Dendritic cell treated with granulocyte-macrophage colony-stimulating factor and Interleukin-4, amounts not matched to agents 40 ng/mL and 50 ng/mL, for 4 days (primary cell): ENCODE measurements at regions of chr18 and their contacts with region 1.

Region 1: GRCh38 chr18:22800551-22800951 is 132.6 kb upstream of the RBBP8 start:
- H3K4me3 Mint-ChIP-seq: no peak overlapping the region
- H3K27ac Mint-ChIP-seq: no peak overlapping the region
- H3K4me1 Mint-ChIP-seq: no peaks in the 10 kb centered on the region
- H3K27me3 Mint-ChIP-seq: peaks cover 2% of the 10 kb centered on the region

Region 2: GRCh38 chr18:22983175-22983574 is 182.6 kb after region 1 on chr18:
- intact Hi-C with region 1: loop called (anchors 1 kb)
- H3K4me3 Mint-ChIP-seq: no peak overlapping the region
- H3K27ac Mint-ChIP-seq: no peak overlapping the region
- H3K4me1 Mint-ChIP-seq: peaks cover 11% of the 10 kb centered on the region
- H3K27me3 Mint-ChIP-seq: no peaks in the 10 kb centered on the region

Region 3: DNA sequence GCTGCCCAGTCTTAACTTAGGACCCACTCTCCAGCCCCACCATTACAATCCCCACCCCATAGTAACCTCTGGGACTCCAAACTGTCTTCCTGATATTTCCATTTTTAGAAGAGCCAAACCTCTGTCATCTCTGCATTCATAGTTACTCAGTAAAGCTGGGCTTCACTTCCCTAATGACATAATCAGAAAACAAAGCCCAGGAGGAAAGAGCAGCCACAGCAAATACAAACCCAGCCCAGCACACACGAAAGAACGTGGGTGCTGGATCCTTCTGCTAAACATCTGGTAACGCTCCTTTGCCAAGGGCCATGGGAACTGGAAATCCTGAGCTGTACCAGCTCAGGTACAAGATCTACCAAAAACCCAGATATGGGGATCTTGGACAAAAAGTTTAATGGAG is 615.7 kb after region 1 on chr18:
- intact Hi-C with region 1: loop called (anchors 1 kb)
- H3K4me3 Mint-ChIP-seq: no peak overlapping the region
- H3K27ac Mint-ChIP-seq: peak overlapping the region; percentile 78
- H3K4me1 Mint-ChIP-seq: peaks cover 19% of the 10 kb centered on the region
- H3K27me3 Mint-ChIP-seq: no peaks in the 10 kb centered on the region